Esophagus squamous epithelium (tissue), 5 donors: ENCODE measurements at regions of chr12 and their contacts with region 1.

Region 1: GRCh38 chr12:56127888-56128669 is at the start of gene ESYT1:
- DNase-seq: peak; percentile 98
- H3K4me3 ChIP-seq: peak within 1 kb of the TSS; percentile 51 to 97 (median 83)
- H3K27ac ChIP-seq: peak within 1 kb of the TSS; percentile 85 to 98 (median 96)
- H3K4me1 ChIP-seq: peaks cover 23 to 60% (median 30%) of the 10 kb centered on the region in 3 donors
- H3K27me3 ChIP-seq: no peaks in the 10 kb centered on the region
- CTCF ChIP-seq: peak in 3 of 6 experiments; percentile 10 to 14 (median 10)
- POLR2A ChIP-seq: peak in 3 of 4 donors; percentile 91 to 97 (median 95)
- total RNA-seq, gene ESYT1: 42.6 to 70.8 (median 62.5) TPM

Region 2: GRCh38 chr12:56189176-56189917 is 61.3 kb after region 1 on chr12 and contains the start of gene SMARCC2:
- intact Hi-C with region 1: loop called (anchors 5 kb)
- DNase-seq: peak; percentile 26
- H3K4me3 ChIP-seq: peak within 1 kb of the TSS; percentile 78 to 97 (median 90)
- H3K27ac ChIP-seq: peak within 1 kb of the TSS; percentile 93 to 99 (median 95)
- H3K4me1 ChIP-seq: peaks cover 18 to 38% (median 25%) of the 10 kb centered on the region in 3 donors
- H3K27me3 ChIP-seq: no peaks in the 10 kb centered on the region
- CTCF ChIP-seq: peak; percentile 58 to 95 (median 84)
- POLR2A ChIP-seq: peak in 1 of 4 donors; percentile 13
- total RNA-seq, gene SMARCC2: 31.7 to 64.9 (median 46.1) TPM